ENCODE measurements at regions of chr7 and their contacts with region 1.

Region 1: DNA sequence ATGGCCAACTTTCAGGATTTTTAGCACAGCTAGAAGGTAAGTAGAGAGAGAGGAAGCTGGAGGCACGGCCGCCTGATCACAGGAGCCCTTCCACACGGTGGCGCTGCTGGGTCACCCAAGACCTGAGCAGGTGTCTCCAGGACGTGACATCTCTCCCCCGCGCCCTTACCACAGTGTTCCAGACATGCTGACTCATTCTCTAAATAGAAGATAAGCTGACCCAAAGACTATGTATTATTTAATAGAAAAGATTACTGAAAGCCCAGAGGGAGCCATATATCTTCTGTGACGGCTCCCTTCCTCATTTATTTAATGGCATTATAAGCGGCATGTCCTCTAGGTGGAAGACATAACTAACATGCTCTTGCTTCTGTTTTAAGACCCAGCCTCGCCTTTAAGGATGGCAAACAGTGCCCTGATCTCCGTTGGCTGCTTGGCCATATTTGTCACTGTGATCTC is 26.0 kb upstream of the MALSU1 start:
- DNase-seq: peak; percentile 92
- H3K4me3 ChIP-seq: peak overlapping the region in 1 of 3 experiments; percentile 7
- H3K27ac ChIP-seq: peak overlapping the region; percentile 42
- H3K4me1 ChIP-seq: peaks cover 9% of the 10 kb centered on the region
- H3K27me3 ChIP-seq: no peaks in the 10 kb centered on the region
- CTCF ChIP-seq: peak; percentile 89 to 95
- POLR2A ChIP-seq: no peak

Region 2: DNA sequence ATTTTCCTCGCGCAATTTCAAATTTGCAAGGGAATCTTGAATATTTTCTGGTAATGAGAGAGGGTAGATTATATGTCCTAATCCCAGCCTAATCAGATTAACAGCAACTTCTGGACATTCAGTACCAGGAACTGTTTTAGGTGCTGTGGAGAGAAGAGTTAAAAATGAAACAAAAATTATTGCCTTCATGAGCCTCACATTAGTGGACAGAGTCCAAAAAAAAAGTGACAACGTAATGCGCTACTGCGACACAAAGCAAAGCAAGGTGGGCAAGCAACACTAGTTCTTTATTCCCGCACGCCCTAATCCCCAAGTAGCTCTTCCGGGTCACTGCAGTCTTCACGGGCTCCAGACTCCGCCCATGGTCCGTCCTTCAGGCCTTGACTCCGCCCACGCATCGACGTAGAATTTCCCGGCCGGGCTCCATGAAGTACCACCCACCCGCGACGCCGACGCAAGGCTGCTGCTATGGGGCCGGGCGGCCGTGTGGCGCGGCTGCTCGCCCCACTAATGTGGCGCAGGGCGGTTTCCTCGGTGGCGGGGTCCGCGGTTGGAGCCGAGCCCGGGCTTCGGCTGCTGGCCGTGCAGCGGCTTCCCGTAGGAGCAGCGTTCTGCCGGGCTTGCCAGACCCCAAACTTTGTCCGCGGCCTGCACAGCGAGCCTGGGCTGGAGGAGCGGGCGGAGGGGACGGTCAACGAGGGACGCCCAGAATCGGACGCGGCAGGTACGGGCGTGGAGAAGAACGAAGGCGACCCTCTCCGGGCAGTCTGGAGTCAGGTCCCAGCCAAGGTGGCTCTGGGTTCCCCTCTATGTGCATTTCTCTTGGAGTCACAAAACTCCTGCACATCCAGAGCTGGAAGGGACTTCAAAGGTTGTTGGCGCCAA is 26.0 kb after region 1 on chr7 and contains the start of gene MALSU1:
- CTCF ChIA-PET with region 1: interaction called, 15 read pairs
- POLR2A ChIA-PET with region 1: no interaction called
- dilution Hi-C with region 1: no loop called
- intact Hi-C with region 1: no loop called
- DNase-seq: peak; percentile 98
- H3K4me3 ChIP-seq: peak within 1 kb of the TSS; percentile 73 to 81 (median 75)
- H3K27ac ChIP-seq: peak within 1 kb of the TSS; percentile 32
- H3K4me1 ChIP-seq: peaks cover 11% of the 10 kb centered on the region
- H3K27me3 ChIP-seq: no peaks in the 10 kb centered on the region
- CTCF ChIP-seq: no peak
- POLR2A ChIP-seq: peak; percentile 88
- total RNA-seq, gene MALSU1: 58.4 and 62.6 TPM in 2 replicates

Region 3: GRCh38 chr7:23462846-23463245 is 189.7 kb after region 1 on chr7:
- CTCF ChIA-PET with region 1: interaction called, 18 read pairs
- POLR2A ChIA-PET with region 1: interaction called, 4 read pairs
- dilution Hi-C with region 1: no loop called
- intact Hi-C with region 1: loop called (anchors 1 kb)
- DNase-seq: peak; percentile 81
- H3K4me3 ChIP-seq: no peak overlapping the region
- H3K27ac ChIP-seq: peak overlapping the region; percentile 31
- H3K4me1 ChIP-seq: peaks cover 42% of the 10 kb centered on the region
- H3K27me3 ChIP-seq: no peaks in the 10 kb centered on the region
- CTCF ChIP-seq: peak; percentile 25 to 41
- POLR2A ChIP-seq: no peak

Region 4: GRCh38 chr7:23514755-23515154 is 241.6 kb after region 1 on chr7:
- CTCF ChIA-PET with region 1: interaction called, 16 read pairs
- POLR2A ChIA-PET with region 1: no interaction called
- dilution Hi-C with region 1: loop called (anchors 25 kb)
- intact Hi-C with region 1: loop called (anchors 2 kb)
- DNase-seq: no peak
- H3K4me3 ChIP-seq: no peak overlapping the region
- H3K27ac ChIP-seq: no peak overlapping the region
- H3K4me1 ChIP-seq: no peaks in the 10 kb centered on the region
- H3K27me3 ChIP-seq: no peaks in the 10 kb centered on the region
- CTCF ChIP-seq: no peak
- POLR2A ChIP-seq: no peak

Region 5: DNA sequence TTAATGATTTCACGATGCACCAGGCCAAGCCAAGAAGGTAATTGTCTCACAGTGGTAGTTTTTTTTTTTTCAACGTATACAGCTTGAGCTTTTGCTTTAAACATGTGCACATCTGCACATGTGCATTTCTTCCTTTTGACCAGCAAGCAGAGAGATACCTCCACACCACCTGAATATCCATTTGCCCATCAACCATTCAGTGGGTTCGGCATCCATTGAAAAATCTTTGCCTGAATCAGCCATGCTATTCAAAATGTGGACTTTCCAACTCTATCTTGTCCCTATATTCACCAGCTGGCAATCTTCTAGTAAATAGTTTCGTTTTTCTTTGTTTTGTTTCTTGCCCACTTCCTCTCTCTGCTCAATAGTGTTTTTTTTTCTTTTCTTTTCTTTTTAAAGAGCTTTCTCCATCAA is 266.3 kb after region 1 on chr7:
- CTCF ChIA-PET with region 1: interaction called, 88 read pairs
- POLR2A ChIA-PET with region 1: interaction called, 5 read pairs
- dilution Hi-C with region 1: no loop called
- intact Hi-C with region 1: no loop called
- DNase-seq: no peak
- H3K4me3 ChIP-seq: no peak overlapping the region
- H3K27ac ChIP-seq: no peak overlapping the region
- H3K4me1 ChIP-seq: no peaks in the 10 kb centered on the region
- H3K27me3 ChIP-seq: no peaks in the 10 kb centered on the region
- CTCF ChIP-seq: no peak
- POLR2A ChIP-seq: no peak

Measured in endothelial cell of umbilical vein (primary cell).